ENCODE measurements at regions of chr1 and their contacts with region 1.

Region 1: GRCh38 chr1:66957938-66958337 is 33.1 kb downstream of the MIER1 start:
- DNase-seq: no peak
- ATAC-seq: no peak
- H3K4me3 ChIP-seq: no peak overlapping the region
- H3K4me3 Mint-ChIP-seq: no peak overlapping the region
- H3K27ac ChIP-seq: no peak overlapping the region
- H3K27ac Mint-ChIP-seq: peak overlapping the region; percentile 34
- H3K4me1 ChIP-seq: peaks cover 7% of the 10 kb centered on the region
- H3K4me1 Mint-ChIP-seq: peaks cover 56% of the 10 kb centered on the region
- H3K27me3 ChIP-seq: no peaks in the 10 kb centered on the region
- H3K27me3 Mint-ChIP-seq: no peaks in the 10 kb centered on the region
- CTCF ChIP-seq: no peak

Region 2: GRCh38 chr1:66981679-66982078 is 23.7 kb after region 1 on chr1:
- CTCF ChIA-PET with region 1: interaction called, 4 read pairs
- POLR2A ChIA-PET with region 1: no interaction called
- intact Hi-C with region 1: loop called in 1 of 2 experiments (anchors 2 kb)
- DNase-seq: peak; percentile 18 to 86 (median 52)
- ATAC-seq: peak; percentile 96
- H3K4me3 ChIP-seq: peak overlapping the region; percentile 38 to 48
- H3K4me3 Mint-ChIP-seq: peak overlapping the region; percentile 75
- H3K27ac ChIP-seq: peak overlapping the region; percentile 44 to 78
- H3K27ac Mint-ChIP-seq: peak overlapping the region; percentile 79
- H3K4me1 ChIP-seq: peaks cover 22% of the 10 kb centered on the region
- H3K4me1 Mint-ChIP-seq: peaks cover 30% of the 10 kb centered on the region
- H3K27me3 ChIP-seq: no peaks in the 10 kb centered on the region
- H3K27me3 Mint-ChIP-seq: no peaks in the 10 kb centered on the region
- CTCF ChIP-seq: no peak

Measured in CD8-positive, alpha-beta T cell (primary cell).